ENCODE measurements at regions of chr18 and their contacts with region 1.

Region 1: GRCh38 chr18:12552884-12553242 is 105.0 kb downstream of the SPIRE1 start:
- DNase-seq: no peak
- ATAC-seq: no peak
- H3K4me3 ChIP-seq: no peak overlapping the region
- H3K27ac ChIP-seq: peak overlapping the region in 1 of 10 donors; percentile 45
- H3K4me1 ChIP-seq: peaks cover 0 to 11% (median 8%) of the 10 kb centered on the region in 9 donors
- H3K27me3 ChIP-seq: no peaks in the 10 kb centered on the region
- CTCF ChIP-seq: no peak

Region 2: DNA sequence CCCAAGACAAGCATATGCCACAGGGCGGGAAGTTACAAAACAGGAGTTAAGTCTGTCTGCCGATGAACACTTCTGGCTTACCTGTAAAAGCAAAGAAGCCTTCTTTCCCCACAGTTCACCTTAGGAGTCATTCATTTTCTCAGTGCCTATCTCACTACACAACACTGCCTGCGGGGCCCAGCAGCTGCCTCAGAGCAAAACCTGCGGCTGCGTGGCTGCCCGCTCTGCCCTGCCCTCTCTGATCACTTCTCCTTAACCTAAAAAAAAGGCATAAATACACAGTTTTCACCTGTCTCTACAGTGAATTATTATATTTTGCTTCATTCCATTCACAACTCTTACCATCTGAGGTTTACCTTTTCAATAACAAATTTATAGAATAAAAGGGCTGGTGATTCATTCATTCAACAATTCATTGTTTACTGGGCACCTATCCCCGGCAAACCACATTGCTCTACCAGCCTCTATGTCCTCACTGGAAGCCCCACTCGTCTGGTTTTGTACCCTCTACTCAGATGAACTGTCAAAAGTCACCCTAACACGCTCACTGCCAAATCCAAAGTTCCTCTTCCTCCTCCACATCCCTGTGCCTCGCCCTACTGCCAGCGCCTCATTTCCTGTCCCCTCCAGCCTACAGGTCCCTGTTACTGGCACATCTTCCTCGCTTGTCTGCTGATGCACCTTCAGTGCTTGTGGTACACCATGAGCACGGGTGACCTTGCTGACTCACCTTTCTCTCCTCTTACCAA is 207.2 kb before region 1 on chr18:
- intact Hi-C with region 1: no loop called
- DNase-seq: no peak
- ATAC-seq: peak in 2 of 8 donors; percentile 15 to 16
- H3K4me3 ChIP-seq: no peak overlapping the region
- H3K27ac ChIP-seq: no peak overlapping the region
- H3K4me1 ChIP-seq: peaks cover 0 to 8% (median 0%) of the 10 kb centered on the region in 9 donors
- H3K27me3 ChIP-seq: no peaks in the 10 kb centered on the region
- CTCF ChIP-seq: no peak

Region 3: GRCh38 chr18:12497291-12497690 is 55.6 kb before region 1 on chr18:
- intact Hi-C with region 1: no loop called
- DNase-seq: no peak
- ATAC-seq: no peak
- H3K4me3 ChIP-seq: no peak overlapping the region
- H3K27ac ChIP-seq: no peak overlapping the region
- H3K4me1 ChIP-seq: no peaks in the 10 kb centered on the region
- H3K27me3 ChIP-seq: no peaks in the 10 kb centered on the region
- CTCF ChIP-seq: no peak

Region 4: GRCh38 chr18:12593866-12594265 is 41.0 kb after region 1 on chr18:
- intact Hi-C with region 1: loop called in 1 of 10 experiments (anchors 5 kb)
- DNase-seq: no peak
- ATAC-seq: no peak
- H3K4me3 ChIP-seq: no peak overlapping the region
- H3K27ac ChIP-seq: no peak overlapping the region
- H3K4me1 ChIP-seq: peaks cover 0 to 45% (median 35%) of the 10 kb centered on the region in 9 donors
- H3K27me3 ChIP-seq: no peaks in the 10 kb centered on the region
- CTCF ChIP-seq: no peak

Region 5: GRCh38 chr18:12606592-12607315 is 53.9 kb after region 1 on chr18:
- intact Hi-C with region 1: no loop called
- DNase-seq: no peak
- ATAC-seq: peak in 6 of 8 donors; percentile 36 to 55 (median 43)
- H3K4me3 ChIP-seq: no peak overlapping the region
- H3K27ac ChIP-seq: peak overlapping the region in 7 of 10 donors; percentile 32 to 84 (median 52)
- H3K4me1 ChIP-seq: peaks cover 0 to 33% (median 6%) of the 10 kb centered on the region in 9 donors
- H3K27me3 ChIP-seq: no peaks in the 10 kb centered on the region
- CTCF ChIP-seq: no peak

Region 6: DNA sequence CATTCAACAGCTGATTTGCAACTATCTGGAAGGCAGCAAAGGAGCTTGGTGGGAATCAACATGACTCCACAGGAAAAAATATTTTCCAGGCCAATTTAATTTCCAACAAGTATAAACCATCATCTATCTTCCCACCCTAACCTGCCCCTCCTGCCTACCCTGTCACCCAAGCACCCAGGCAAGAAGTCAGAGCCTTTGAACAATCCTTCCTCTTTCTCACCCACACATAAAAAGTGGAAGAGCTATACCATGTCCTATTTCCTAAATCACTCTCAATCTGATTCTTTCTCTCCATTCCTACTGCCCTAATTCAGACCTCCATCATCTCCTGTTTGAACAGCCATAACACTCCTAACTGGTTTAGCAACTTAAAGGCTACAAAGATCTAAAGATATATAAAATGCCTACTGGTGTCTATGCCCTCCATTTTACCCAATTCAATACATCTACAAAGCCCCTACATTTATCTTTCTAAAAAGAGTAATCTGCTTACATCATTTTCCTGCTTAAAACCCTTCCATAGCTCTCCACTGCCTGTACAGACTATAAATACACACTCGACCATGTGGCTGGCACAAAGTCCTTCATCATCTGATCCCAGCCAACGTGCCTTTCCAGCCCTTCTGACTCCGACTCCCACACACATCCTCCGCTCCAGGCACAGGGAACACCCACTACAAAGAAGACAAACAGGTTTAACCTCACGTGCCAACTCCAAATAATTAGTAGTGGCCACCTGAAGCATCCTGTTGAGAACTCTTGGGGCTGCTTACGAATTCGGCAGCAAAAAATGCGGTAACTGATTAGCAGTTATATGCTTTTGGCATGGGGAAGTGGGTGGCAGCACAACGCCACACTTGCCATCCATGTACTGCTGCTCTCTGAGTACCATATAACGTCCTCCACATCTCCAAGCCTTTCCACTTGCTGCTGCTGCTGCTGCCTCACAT is 92.7 kb after region 1 on chr18:
- intact Hi-C with region 1: loop called in 2 of 10 experiments (anchors 5 to 10 kb)
- DNase-seq: peak; percentile 31 to 69
- ATAC-seq: peak; percentile 89 to 98 (median 95)
- H3K4me3 ChIP-seq: peak overlapping the region in 2 of 10 donors; percentile 10 to 21
- H3K27ac ChIP-seq: peak overlapping the region; percentile 3 to 87 (median 71)
- H3K4me1 ChIP-seq: peaks cover 5 to 66% (median 22%) of the 10 kb centered on the region in 9 donors
- H3K27me3 ChIP-seq: no peaks in the 10 kb centered on the region
- CTCF ChIP-seq: no peak